K562 (cell line): ENCODE measurements at regions of chr9 and their contacts with region 1.

Region 1: DNA sequence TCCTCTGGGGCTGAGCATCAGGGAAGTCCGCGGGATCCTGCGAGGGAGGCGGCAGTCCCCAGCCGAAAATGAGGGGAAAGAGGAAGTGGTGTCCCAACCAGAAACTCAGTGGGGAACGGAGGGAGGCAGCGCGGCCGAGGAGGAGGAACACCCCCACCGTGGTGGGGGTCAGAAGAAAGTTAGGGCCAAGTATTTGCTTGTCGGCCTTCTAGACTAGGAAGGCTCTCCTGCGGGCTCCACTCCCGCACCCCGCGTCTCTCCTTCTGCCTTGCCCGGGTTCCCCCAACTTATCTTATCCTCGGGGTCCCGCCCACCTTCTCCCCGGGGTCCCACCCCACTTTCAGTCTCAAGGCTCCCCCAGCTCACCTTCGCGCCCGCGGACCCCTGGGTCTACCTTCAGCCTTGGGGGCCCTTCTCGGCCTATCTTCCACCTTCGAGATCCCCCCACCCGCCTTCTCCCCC is 557 bp upstream of the PHF2 start:
- DNase-seq: peak; percentile 67 to 83 (median 78)
- ATAC-seq: peak; percentile 68
- H3K4me3 ChIP-seq: peak overlapping the region; percentile 74
- H3K27ac ChIP-seq: peak overlapping the region; percentile 84
- H3K4me1 ChIP-seq: peaks cover 13 to 37% of the 10 kb centered on the region in 2 experiments
- H3K27me3 ChIP-seq: no peaks in the 10 kb centered on the region
- CTCF ChIP-seq: no peak
- EP300 ChIP-seq: no peak
- POLR2A ChIP-seq: peak; percentile 71
- RAD21 ChIP-seq: no peak

Region 2: DNA sequence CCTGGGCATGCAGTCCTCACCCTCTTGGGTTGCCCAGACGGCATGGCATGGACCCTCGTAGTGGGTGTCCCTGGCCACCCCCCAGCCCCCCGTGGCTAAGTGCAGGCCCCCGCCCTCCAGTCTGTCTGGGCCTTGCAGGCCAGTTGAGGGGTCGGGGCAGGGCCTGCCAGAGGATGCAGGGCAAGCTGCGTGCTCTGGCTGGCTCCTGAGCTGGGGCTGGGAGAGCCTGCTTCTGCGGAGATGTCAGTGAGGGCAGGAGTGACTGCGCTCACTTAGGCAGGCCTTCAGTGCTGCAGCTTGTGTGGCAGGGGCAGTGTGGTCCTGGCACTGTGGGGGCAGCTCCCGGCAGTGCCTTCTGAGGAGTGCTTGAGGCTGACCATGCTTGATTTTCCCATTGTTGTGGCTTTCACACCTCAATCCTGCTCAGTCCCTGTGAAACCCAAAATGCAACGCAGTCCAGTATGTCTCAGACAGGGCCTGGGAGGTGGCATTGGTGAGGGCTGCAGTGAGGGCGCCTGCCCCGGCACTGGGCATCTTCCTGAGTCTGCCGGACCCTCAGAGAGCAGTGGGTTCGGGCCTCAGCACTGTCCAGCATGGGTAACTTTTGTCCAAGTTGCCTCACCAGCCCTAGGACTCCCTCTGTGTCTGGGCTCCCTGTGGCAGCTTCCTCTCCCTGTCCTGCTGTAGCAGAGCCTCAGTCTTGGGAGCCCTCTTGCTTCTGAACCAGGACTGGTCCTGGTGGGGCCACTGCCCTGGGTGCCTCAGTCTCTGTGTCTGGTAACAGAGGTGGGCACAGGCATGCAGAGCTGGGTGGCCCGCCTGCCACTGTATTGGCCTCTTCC is 93.5 kb after region 1 on chr9:
- CTCF ChIA-PET with region 1: no interaction called
- POLR2A ChIA-PET with region 1: interaction called, 4 read pairs
- in situ Hi-C with region 1: no loop called
- intact Hi-C with region 1: loop called (anchors 10 kb)
- DNase-seq: no peak
- ATAC-seq: no peak
- H3K4me3 ChIP-seq: no peak overlapping the region
- H3K27ac ChIP-seq: no peak overlapping the region
- H3K4me1 ChIP-seq: peaks cover 7 to 37% of the 10 kb centered on the region in 2 experiments; a peak in 4 of 5 replicates
- H3K27me3 ChIP-seq: no peaks in the 10 kb centered on the region
- CTCF ChIP-seq: no peak
- EP300 ChIP-seq: no peak
- POLR2A ChIP-seq: no peak
- RAD21 ChIP-seq: no peak